ENCODE measurements at regions of chr21 and their contacts with region 1.

Region 1: DNA sequence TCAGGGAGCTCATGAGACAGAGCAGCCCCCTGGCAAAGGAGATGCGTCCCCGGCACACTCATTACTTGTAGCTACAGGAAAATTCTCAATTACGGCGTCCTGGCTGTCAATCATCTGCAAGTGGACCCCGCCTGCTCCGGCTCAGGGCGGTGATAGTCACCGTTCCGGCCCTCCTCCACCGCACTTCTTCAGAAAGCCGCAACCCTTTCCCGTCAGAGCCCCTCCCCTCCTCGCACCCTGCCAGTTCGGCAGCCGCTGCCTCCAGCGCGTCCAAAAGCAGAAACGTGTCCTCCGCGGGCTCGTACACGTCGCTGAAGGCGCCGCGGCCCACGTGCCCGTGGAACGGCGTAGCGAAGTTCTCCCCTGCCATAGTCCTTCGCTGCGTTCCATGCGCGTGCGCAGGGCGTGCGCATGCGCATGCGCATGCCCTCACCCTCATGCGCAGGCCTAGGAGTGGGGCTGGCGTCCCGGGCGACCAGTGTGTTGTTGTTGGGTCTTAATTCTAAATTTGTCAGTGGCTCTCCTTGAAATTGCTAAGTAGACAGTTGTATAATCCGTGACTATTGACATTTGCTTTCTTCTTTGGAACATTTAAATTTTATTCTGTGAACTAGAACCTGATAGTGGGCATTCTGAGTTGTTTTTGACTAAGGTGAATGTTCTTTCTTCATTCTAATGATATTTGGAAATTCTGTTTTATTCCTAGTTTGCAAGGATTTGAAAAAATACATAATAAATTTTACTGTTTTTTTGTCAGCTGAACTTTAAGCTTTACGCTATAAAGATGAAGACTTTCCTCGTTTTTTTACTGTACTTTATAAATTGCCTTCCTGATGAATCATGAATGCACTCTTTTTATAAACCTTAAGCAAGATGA is 107.5 kb downstream of the LTN1 start:
- DNase-seq: peak; percentile 98
- H3K4me3 Mint-ChIP-seq: peak overlapping the region; percentile 89
- H3K27ac Mint-ChIP-seq: peak overlapping the region; percentile 97
- H3K4me1 Mint-ChIP-seq: peaks cover 14% of the 10 kb centered on the region
- H3K27me3 Mint-ChIP-seq: peaks cover 20% of the 10 kb centered on the region

Region 2: DNA sequence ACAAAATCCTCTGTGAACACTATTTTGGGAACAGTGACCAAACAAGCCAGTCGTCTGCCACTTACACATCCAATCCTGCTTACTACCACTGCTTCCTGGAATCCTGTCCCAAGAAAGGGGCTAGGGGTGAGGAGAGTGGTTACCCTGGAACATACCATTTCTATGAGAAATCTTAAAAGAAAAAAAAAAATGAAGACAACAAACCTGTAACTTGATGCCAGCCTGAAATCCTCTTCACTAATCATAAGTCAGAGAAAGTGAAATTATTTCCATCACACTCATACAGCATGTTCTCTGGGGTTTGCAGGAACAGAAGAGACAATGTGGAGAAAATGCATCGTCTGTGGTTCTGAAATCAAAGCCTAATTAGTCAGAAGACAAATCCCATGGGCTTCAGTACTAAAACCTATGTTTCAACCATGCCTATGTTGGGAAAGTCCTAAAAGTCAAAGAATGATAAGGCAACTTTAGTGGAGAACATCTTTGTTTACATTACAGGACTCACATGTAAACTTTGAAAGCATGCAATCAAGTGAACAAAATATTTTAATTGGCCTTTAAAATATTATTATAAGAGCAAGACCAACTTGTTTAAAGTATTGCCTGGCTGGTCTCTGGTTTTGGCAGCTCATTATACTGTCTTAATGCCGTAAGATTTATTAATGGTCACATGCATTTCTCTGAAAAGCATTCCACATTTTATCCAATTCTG is 113.3 kb before region 1 on chr21:
- intact Hi-C with region 1: loop called (anchors 5 kb)
- DNase-seq: no peak
- H3K4me3 Mint-ChIP-seq: no peak overlapping the region
- H3K27ac Mint-ChIP-seq: no peak overlapping the region
- H3K4me1 Mint-ChIP-seq: peaks cover 44% of the 10 kb centered on the region
- H3K27me3 Mint-ChIP-seq: no peaks in the 10 kb centered on the region

Region 3: DNA sequence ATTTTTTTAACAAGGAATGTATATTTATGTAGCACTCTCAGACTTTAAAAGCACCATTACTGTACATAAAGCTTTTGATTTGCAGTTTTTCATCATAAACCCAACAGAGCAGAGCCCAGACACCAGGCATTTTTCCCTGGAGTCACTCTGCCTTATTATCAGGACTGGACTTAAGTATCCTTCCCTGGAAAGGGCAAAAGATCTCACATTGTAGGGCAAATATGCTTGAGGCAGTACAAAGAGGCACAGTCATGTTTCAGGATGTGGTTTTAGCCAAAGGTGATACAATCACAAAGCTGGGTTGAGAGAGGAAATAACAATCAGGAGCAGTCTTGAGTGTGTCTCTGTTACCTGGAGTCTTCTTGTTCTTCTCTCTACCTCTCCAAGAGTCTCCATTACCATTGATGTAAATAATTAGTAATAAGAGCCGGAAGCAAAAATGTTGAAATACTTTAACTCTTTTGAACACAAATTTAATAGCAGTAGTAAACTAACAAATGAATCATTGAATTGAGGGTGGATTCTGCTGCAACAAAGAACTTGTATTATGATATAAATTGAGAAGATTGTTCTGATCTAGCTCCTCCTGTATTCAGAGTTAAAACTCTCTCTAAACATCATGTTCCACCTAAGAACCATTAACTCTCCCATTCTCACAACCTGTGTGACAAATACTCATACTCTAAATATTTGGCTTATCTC is 53.0 kb before region 1 on chr21:
- intact Hi-C with region 1: loop called (anchors 2 kb)
- DNase-seq: peak; percentile 84
- H3K4me3 Mint-ChIP-seq: peak overlapping the region; percentile 75
- H3K27ac Mint-ChIP-seq: peak overlapping the region; percentile 83
- H3K4me1 Mint-ChIP-seq: peaks cover 58% of the 10 kb centered on the region
- H3K27me3 Mint-ChIP-seq: no peaks in the 10 kb centered on the region

Region 4: GRCh38 chr21:28992526-28993292 is 107.5 kb after region 1 on chr21 and contains the start of gene LTN1:
- intact Hi-C with region 1: loop called (anchors 1 kb)
- DNase-seq: peak; percentile 100
- H3K4me3 Mint-ChIP-seq: peak within 1 kb of the TSS; percentile 94
- H3K27ac Mint-ChIP-seq: peak within 1 kb of the TSS; percentile 98
- H3K4me1 Mint-ChIP-seq: peaks cover 40% of the 10 kb centered on the region
- H3K27me3 Mint-ChIP-seq: peaks cover 2% of the 10 kb centered on the region
- total RNA-seq, gene LTN1: 25.6 and 31.0 TPM in 2 replicates

Region 5: DNA sequence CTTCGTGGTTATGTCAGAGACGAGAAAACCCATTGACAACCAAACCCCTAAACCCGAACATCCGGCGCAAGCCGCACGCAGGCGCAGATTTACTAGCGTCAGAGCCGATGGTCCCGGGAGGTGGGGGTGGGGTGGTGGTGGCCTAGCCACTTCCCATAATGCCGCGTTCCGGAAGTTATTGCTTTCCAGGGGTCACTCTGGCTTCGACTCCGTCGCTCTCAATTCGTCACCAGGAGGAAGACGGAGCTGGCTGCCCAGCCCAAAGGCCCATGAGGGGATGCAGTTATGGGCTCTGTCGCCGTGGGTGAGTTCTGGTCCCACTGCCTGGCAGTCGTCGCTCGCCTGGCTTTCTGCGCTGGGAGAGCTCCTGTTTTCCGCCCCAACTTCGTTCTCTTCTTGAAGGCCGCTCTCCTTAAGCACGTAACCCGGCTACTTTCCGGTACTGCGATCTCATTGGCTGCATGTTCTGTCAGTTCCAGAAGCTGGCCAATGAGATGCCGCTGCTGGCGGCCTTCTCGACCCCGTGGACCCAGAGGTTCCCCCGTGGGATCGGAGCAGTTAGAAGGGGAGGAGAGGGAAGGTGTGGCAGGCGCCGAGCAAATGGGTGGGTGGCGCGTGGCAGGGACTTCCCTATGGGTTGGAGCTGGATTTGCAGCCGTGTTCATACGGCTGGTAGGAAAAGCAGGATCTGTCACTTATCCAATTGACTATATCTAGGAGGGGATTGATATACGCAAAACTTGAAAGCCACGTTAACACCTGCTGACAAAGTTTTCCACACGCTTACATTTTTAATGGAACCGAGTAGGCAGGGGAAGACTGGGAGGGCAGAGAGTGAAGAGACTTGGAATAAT is 139.5 kb after region 1 on chr21 and contains the start of gene USP16:
- intact Hi-C with region 1: loop called (anchors 2 kb)
- DNase-seq: peak; percentile 99
- H3K4me3 Mint-ChIP-seq: peak within 1 kb of the TSS; percentile 93
- H3K27ac Mint-ChIP-seq: peak within 1 kb of the TSS; percentile 99
- H3K4me1 Mint-ChIP-seq: peaks cover 41% of the 10 kb centered on the region
- H3K27me3 Mint-ChIP-seq: no peaks in the 10 kb centered on the region
- total RNA-seq, gene USP16: 45.7 and 46.7 TPM in 2 replicates

Region 6: DNA sequence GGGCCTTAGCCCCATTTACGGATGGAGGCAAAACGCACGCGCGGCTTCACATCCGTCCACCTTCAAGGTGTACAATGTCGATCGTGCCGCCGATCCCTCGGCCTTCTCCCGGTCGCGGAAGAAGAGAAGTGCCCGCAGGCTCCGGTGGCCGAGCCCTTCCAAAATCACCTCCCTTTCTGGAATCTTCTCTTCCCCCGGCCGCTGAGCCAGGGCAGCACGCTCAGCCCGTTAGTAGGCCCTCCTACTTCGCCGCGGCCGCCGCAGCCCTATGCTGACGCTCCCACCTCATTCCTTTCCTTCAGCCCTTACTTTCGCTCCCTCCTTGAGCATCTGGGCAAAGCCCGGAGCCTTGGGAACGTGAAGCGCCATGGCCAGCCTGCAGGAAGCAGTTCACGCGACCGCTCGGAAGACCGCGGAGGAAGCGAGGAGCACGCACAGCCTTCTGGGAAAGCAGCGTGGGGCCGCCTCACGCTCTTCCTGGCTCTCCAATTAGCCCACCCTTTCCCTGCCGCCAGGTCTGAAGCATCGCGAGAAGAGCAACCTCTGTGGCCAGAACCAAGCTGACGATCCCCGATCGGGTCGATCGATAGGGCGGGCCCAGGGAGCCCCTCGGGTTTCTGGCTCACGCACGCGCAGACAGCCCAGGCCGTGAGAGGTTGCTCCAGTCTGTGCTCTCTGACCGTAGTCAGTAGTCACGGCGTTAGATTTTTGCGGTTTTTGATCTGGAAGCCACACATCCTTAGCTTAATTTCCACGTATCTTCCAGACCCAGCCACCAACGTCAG is 188.2 kb after region 1 on chr21 and contains the start of gene CCT8:
- intact Hi-C with region 1: loop called (anchors 1 kb)
- DNase-seq: peak; percentile 99
- H3K4me3 Mint-ChIP-seq: peak within 1 kb of the TSS; percentile 100
- H3K27ac Mint-ChIP-seq: peak within 1 kb of the TSS; percentile 99
- H3K4me1 Mint-ChIP-seq: peaks cover 47% of the 10 kb centered on the region
- H3K27me3 Mint-ChIP-seq: no peaks in the 10 kb centered on the region
- total RNA-seq, gene CCT8: 432 and 438 TPM in 2 replicates

Measured in activated CD4-positive, alpha-beta T cell treated with anti-CD3 and anti-CD28 coated beads, Interleukin-2, amount 10 ng/mL, durations not matched to agents 24 days and 14 days (primary cell).